ENCODE measurements at regions of chr5 and their contacts with region 1.

Region 1: GRCh38 chr5:75034137-75034750 is 18.1 kb downstream of the GCNT4 start:
- DNase-seq: peak in 7 of 9 donors; percentile 23 to 69 (median 52)
- ATAC-seq: peak; percentile 74
- H3K4me3 ChIP-seq: peak overlapping the region; percentile 10
- H3K4me3 Mint-ChIP-seq: peak overlapping the region; percentile 19 to 76 (median 62)
- H3K27ac ChIP-seq: peak overlapping the region; percentile 31
- H3K27ac Mint-ChIP-seq: peak overlapping the region in 8 of 9 donors; percentile 76 to 97 (median 82)
- H3K4me1 ChIP-seq: peaks cover 25 to 42% of the 10 kb centered on the region in 2 donors
- H3K4me1 Mint-ChIP-seq: peaks cover 22 to 94% (median 85%) of the 10 kb centered on the region in 7 donors
- H3K27me3 ChIP-seq: no peaks in the 10 kb centered on the region
- H3K27me3 Mint-ChIP-seq: no peaks in the 10 kb centered on the region

Region 2: GRCh38 chr5:74945561-74946165 is 88.6 kb before region 1 on chr5:
- CTCF ChIA-PET with region 1: no interaction called
- POLR2A ChIA-PET with region 1: no interaction called
- intact Hi-C with region 1: loop called in 1 of 2 experiments (anchors 2 kb)
- DNase-seq: peak in 1 of 9 donors; percentile 33
- ATAC-seq: no peak
- H3K4me3 ChIP-seq: no peak overlapping the region
- H3K4me3 Mint-ChIP-seq: peak overlapping the region in 1 of 10 donors; percentile 49
- H3K27ac ChIP-seq: no peak overlapping the region
- H3K27ac Mint-ChIP-seq: no peak overlapping the region
- H3K4me1 ChIP-seq: no peaks in the 10 kb centered on the region
- H3K4me1 Mint-ChIP-seq: peaks cover 0 to 9% (median 4%) of the 10 kb centered on the region in 7 donors
- H3K27me3 ChIP-seq: no peaks in the 10 kb centered on the region
- H3K27me3 Mint-ChIP-seq: peaks cover 0 to 45% (median 3%) of the 10 kb centered on the region in 5 donors

Region 3: GRCh38 chr5:75837258-75837841 is 803.1 kb after region 1 on chr5:
- CTCF ChIA-PET with region 1: no interaction called
- POLR2A ChIA-PET with region 1: no interaction called
- intact Hi-C with region 1: no loop called
- DNase-seq: no peak
- ATAC-seq: no peak
- H3K4me3 ChIP-seq: no peak overlapping the region
- H3K4me3 Mint-ChIP-seq: no peak overlapping the region
- H3K27ac ChIP-seq: no peak overlapping the region
- H3K27ac Mint-ChIP-seq: no peak overlapping the region
- H3K4me1 ChIP-seq: no peaks in the 10 kb centered on the region
- H3K4me1 Mint-ChIP-seq: peaks cover 0 to 2% (median 0%) of the 10 kb centered on the region in 7 donors
- H3K27me3 ChIP-seq: no peaks in the 10 kb centered on the region
- H3K27me3 Mint-ChIP-seq: peaks cover 0 to 23% (median 8%) of the 10 kb centered on the region in 5 donors